Activated naive CD4-positive, alpha-beta T cell treated with anti-CD3 and anti-CD28 coated beads for 36 hours (primary cell): ENCODE measurements at regions of chr14 and their contacts with region 1.

Region 1: DNA sequence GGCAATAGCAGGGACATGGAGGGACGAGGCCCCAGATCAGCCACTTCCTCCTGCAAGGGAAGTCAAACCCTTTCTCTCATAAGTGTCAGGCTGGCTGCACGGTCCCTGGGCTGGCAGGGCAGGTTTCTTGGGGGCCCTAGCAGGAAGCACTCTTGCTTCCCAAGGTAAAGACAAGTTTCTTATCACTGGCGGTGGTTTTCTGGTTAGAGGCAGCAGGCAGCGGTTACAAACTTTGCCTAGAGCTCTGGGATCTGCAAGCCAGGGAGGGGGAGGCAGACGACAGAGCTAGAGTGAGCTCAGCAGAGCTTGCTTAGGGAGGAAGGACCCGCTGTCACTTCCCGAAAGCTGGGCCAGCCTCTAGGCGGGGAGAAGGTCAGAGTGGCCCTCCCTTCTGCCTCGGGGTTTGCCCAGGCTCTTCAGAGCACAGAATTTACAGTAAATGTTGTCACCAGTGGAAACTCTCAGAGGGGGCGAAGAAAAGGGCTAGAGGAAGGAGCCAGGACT is 20.4 kb downstream of the BATF start:
- DNase-seq: peak; percentile 97
- H3K4me3 Mint-ChIP-seq: peak overlapping the region; percentile 65
- H3K27ac Mint-ChIP-seq: peak overlapping the region; percentile 99
- H3K4me1 Mint-ChIP-seq: peaks cover 84% of the 10 kb centered on the region
- H3K27me3 Mint-ChIP-seq: no peaks in the 10 kb centered on the region

Region 2: DNA sequence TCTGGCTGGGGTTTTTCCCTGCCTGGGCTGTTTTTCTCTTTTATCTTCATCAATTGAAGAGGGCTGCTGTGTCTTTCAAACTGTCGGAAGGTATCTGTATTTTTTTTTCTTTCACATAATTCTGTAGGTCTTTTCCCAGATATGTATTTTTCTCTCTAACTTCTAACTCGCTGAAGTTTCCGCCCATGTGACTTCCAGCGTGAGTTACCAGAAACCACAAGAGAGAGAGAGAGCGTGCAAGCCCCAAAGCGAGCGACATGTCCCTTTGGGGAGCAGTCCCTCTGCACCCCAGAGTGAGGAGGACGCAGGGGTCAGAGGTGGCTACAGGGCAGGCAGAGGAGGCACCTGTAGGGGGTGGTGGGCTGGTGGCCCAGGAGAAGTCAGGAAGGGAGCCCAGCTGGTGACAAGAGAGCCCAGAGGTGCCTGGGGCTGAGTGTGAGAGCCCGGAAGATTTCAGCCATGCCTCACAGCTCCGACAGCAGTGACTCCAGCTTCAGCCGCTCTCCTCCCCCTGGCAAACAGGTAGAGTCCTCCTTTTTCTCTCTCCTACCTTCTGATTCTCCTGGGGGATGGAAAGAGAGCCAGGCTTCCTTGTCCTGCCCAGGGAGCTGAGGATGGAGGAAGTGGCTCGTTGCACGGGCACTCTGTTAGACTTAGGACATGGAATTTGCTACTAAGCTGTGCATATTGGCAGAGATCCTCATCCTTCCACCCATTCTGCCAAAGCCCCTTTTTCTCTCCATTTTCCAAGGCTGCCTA is 20.2 kb before region 1 on chr14 and contains the start of gene BATF:
- CTCF ChIA-PET with region 1: interaction called, 47 read pairs
- intact Hi-C with region 1: loop called (anchors 1 kb)
- DNase-seq: peak; percentile 91
- H3K4me3 Mint-ChIP-seq: peak within 1 kb of the TSS; percentile 99
- H3K27ac Mint-ChIP-seq: peak within 1 kb of the TSS; percentile 100
- H3K4me1 Mint-ChIP-seq: peaks cover 61% of the 10 kb centered on the region
- H3K27me3 Mint-ChIP-seq: no peaks in the 10 kb centered on the region
- total RNA-seq, gene BATF: 178 to 179 TPM

Region 3: DNA sequence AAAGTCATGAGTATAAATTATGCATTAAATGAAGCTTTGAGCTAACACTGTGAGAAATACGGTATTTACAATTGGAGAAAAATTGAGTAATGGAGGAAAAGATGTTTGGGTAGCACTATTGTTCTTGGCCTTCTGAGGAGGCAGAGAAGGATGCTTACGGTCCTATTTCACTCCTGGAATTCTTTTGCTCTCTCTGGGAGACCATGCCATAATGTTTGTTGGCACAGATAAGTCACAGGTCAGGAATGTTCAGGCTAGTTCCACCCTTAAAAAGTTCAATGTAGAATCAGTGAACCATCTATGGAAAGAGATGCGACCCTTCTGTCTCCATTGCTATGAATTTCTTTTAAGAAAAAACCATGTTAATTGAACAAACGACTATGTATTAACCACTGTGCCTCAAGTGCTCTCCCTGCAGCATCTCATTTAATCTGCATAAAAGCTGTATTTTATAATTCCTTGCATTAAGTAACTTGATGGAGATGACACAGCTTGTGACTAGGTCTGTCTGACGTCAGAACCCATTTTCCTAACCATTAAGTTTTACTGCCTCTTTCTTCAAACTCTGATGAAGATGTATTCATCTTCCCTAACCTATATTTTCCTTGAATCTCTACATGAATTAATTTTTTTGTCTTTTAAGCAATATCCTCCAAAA is 10.9 kb before region 1 on chr14:
- CTCF ChIA-PET with region 1: interaction called, 6 read pairs
- intact Hi-C with region 1: loop called (anchors 1 kb)
- DNase-seq: no peak
- H3K4me3 Mint-ChIP-seq: peak overlapping the region; percentile 30
- H3K27ac Mint-ChIP-seq: peak overlapping the region; percentile 75
- H3K4me1 Mint-ChIP-seq: peaks cover 83% of the 10 kb centered on the region
- H3K27me3 Mint-ChIP-seq: no peaks in the 10 kb centered on the region